ENCODE measurements at regions of chr6 and their contacts with region 1.

Region 1: DNA sequence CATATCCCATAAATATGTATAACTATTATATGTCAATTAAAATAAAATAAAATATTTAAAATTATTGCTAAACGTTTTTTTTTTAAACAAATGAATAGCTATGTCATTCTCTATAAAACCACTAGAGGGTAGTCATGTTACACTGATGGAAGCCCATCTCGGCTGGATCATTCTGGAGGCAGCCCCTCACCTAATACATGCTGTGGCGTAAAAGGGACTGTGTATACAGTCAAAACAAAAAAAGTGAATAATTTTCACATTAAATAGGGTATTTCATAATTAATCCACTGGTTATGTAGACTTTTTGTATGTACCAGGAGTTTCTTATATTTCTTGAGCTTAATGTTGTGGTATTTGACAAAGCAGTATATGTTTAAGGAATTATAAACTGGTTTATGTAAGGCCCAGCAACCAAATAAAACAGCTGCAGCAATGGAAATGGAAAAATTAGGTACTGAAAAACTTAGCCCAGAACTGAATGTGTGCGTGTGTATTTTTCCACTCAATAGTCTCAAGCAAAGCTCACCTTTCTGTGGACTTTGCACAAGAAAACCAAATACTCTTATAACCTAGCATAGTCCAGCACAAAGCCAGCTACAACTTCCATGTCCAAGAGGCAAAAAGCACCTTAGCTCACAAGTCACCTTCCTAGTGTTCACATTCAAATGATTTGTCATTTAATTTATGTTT is 81.7 kb downstream of the COL9A1 start:
- DNase-seq: no peak
- ATAC-seq: no peak
- H3K4me3 Mint-ChIP-seq: no peak overlapping the region
- H3K27ac Mint-ChIP-seq: no peak overlapping the region
- H3K4me1 Mint-ChIP-seq: no peaks in the 10 kb centered on the region
- H3K27me3 Mint-ChIP-seq: peaks cover 13% of the 10 kb centered on the region

Region 2: DNA sequence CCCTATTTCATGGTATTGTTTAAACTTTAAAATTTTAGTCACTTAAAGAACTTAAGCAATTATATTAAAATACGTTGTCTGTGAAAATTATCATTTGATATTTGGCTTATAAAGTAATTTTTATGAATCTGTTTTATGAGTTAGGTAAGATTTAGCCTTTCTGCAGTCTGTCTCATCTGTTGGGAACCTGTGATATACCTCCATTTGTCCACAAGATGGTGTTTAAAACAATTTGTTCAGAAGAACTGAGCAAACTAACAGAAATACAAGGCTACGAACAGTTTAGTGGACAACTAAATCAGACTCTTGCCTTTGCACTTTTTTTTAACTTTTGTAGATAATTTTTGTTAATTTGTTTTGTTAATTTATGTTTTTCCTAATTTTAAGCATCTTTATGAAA is 10.7 kb before region 1 on chr6:
- CTCF ChIA-PET with region 1: interaction called, 14 read pairs
- DNase-seq: no peak
- ATAC-seq: no peak
- H3K4me3 Mint-ChIP-seq: no peak overlapping the region
- H3K27ac Mint-ChIP-seq: no peak overlapping the region
- H3K4me1 Mint-ChIP-seq: no peaks in the 10 kb centered on the region
- H3K27me3 Mint-ChIP-seq: peaks cover 37% of the 10 kb centered on the region

Region 3: GRCh38 chr6:70231311-70231710 is 10.1 kb after region 1 on chr6:
- CTCF ChIA-PET with region 1: interaction called, 17 read pairs
- DNase-seq: no peak
- ATAC-seq: no peak
- H3K4me3 Mint-ChIP-seq: no peak overlapping the region
- H3K27ac Mint-ChIP-seq: no peak overlapping the region
- H3K4me1 Mint-ChIP-seq: no peaks in the 10 kb centered on the region
- H3K27me3 Mint-ChIP-seq: peaks cover 18% of the 10 kb centered on the region

Region 4: DNA sequence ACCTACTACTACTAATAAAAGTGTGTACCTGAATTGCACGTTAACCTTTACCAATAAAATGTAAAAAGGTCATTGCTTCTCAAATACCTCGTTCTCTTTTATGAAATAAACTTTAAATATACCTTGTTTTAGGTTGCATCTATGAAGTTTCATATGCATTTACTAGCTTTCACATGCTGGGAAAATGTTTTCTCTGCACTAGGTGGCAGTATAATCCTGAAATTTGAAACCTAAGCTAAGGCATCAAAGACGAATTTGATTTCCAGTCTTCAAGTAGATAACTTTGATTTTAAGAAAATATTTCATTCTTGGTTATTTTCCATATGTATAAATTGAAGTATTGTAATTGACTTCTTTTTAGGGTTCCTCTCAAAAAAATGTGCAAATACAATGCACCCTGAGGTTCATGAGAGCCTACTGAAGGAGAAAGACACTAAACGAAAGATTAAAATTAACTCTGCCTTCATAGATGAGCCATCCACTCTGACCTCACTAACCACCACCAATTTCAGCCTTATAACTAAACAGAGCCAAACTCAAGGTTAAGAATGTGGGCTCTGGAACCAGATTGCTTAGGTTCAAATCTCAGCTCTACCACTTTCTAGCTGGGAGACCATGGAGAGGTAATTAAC is 89.0 kb after region 1 on chr6:
- CTCF ChIA-PET with region 1: interaction called, 18 read pairs
- DNase-seq: no peak
- ATAC-seq: no peak
- H3K4me3 Mint-ChIP-seq: no peak overlapping the region
- H3K27ac Mint-ChIP-seq: no peak overlapping the region
- H3K4me1 Mint-ChIP-seq: no peaks in the 10 kb centered on the region
- H3K27me3 Mint-ChIP-seq: peaks cover 32% of the 10 kb centered on the region

Region 5: GRCh38 chr6:70336996-70337742 is 116.0 kb after region 1 on chr6:
- CTCF ChIA-PET with region 1: no interaction called
- DNase-seq: no peak
- ATAC-seq: no peak
- H3K4me3 Mint-ChIP-seq: no peak overlapping the region
- H3K27ac Mint-ChIP-seq: no peak overlapping the region
- H3K4me1 Mint-ChIP-seq: no peaks in the 10 kb centered on the region
- H3K27me3 Mint-ChIP-seq: peaks cover 9% of the 10 kb centered on the region

Region 6: GRCh38 chr6:70369332-70369950 is 148.3 kb after region 1 on chr6:
- CTCF ChIA-PET with region 1: interaction called, 64 read pairs
- DNase-seq: peak; percentile 69
- ATAC-seq: peak; percentile 73
- H3K4me3 Mint-ChIP-seq: no peak overlapping the region
- H3K27ac Mint-ChIP-seq: no peak overlapping the region
- H3K4me1 Mint-ChIP-seq: no peaks in the 10 kb centered on the region
- H3K27me3 Mint-ChIP-seq: peaks cover 33% of the 10 kb centered on the region

Region 7: GRCh38 chr6:70421509-70421908 is 200.3 kb after region 1 on chr6:
- CTCF ChIA-PET with region 1: no interaction called
- DNase-seq: no peak
- ATAC-seq: no peak
- H3K4me3 Mint-ChIP-seq: no peak overlapping the region
- H3K27ac Mint-ChIP-seq: no peak overlapping the region
- H3K4me1 Mint-ChIP-seq: no peaks in the 10 kb centered on the region
- H3K27me3 Mint-ChIP-seq: no peaks in the 10 kb centered on the region